ENCODE measurements at regions of chr9 and their contacts with region 1.

Region 1: GRCh38 chr9:17881371-17881770 is 302.5 kb downstream of the SH3GL2 start:
- DNase-seq: no peak
- ATAC-seq: no peak
- H3K4me3 ChIP-seq: no peak overlapping the region
- H3K27ac ChIP-seq: no peak overlapping the region
- H3K4me1 ChIP-seq: no peaks in the 10 kb centered on the region
- H3K27me3 ChIP-seq: no peaks in the 10 kb centered on the region
- CTCF ChIP-seq: no peak

Region 2: GRCh38 chr9:17272536-17272935 is 608.8 kb before region 1 on chr9:
- intact Hi-C with region 1: no loop called
- DNase-seq: no peak
- ATAC-seq: no peak
- H3K4me3 ChIP-seq: no peak overlapping the region
- H3K27ac ChIP-seq: no peak overlapping the region
- H3K4me1 ChIP-seq: no peaks in the 10 kb centered on the region
- H3K27me3 ChIP-seq: no peaks in the 10 kb centered on the region
- CTCF ChIP-seq: no peak

Region 3: GRCh38 chr9:17824191-17824590 is 57.2 kb before region 1 on chr9:
- intact Hi-C with region 1: no loop called
- DNase-seq: no peak
- ATAC-seq: peak in 6 of 8 donors; percentile 58 to 83 (median 74)
- H3K4me3 ChIP-seq: no peak overlapping the region
- H3K27ac ChIP-seq: peak overlapping the region in 7 of 10 donors; percentile 2 to 58 (median 31)
- H3K4me1 ChIP-seq: peaks cover 0 to 20% (median 14%) of the 10 kb centered on the region in 9 donors
- H3K27me3 ChIP-seq: no peaks in the 10 kb centered on the region
- CTCF ChIP-seq: peak in 1 of 9 donors; percentile 36

Region 4: DNA sequence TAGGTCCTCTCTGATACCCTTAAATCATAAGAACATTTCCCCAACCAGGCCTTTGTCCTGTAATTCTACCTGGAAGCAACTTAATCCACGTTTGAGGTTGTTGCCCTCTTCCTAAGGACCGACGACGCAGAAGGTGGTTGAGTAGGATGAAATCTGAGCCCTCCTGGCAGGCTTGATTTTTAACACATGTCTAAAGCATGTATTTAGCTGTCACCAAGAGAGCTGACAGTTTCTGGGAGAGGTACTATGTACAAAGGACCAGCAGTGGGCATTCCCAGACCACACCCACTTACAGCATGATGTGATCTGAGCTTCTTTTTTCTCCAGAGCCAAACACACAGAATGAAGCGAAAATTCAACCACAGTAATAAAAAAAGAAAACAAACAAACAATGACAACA is 41.6 kb before region 1 on chr9:
- intact Hi-C with region 1: loop called in 1 of 10 experiments (anchors 5 kb)
- DNase-seq: no peak
- ATAC-seq: no peak
- H3K4me3 ChIP-seq: no peak overlapping the region
- H3K27ac ChIP-seq: no peak overlapping the region
- H3K4me1 ChIP-seq: no peaks in the 10 kb centered on the region
- H3K27me3 ChIP-seq: no peaks in the 10 kb centered on the region
- CTCF ChIP-seq: no peak

Region 5: DNA sequence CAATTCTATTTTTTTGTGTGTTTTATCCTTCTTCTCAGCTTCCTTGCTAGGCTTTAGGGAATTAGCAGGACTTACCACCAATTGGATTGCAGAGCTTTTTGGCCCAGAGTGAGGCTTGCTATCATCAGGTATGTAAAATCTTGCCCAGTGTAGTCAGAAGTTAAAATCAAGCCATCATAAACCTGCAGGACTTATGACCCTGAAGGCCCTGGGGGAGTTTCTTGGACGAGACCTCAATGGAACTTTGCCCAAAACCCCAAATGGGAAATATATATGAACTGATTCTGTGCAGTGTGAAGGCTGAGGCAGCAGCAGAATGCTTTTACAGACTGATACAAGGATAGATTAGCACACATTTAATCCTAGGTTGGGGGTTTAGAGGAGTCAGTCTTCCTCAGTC is 15.5 kb before region 1 on chr9:
- intact Hi-C with region 1: loop called in 1 of 10 experiments (anchors 2 kb)
- DNase-seq: no peak
- ATAC-seq: no peak
- H3K4me3 ChIP-seq: no peak overlapping the region
- H3K27ac ChIP-seq: no peak overlapping the region
- H3K4me1 ChIP-seq: peaks cover 0 to 5% (median 0%) of the 10 kb centered on the region in 9 donors
- H3K27me3 ChIP-seq: no peaks in the 10 kb centered on the region
- CTCF ChIP-seq: no peak

Measured in heart right ventricle (tissue), 16 donors.